CD8-positive, alpha-beta T cell (primary cell): ENCODE measurements at regions of chr11 and their contacts with region 1.

Region 1: DNA sequence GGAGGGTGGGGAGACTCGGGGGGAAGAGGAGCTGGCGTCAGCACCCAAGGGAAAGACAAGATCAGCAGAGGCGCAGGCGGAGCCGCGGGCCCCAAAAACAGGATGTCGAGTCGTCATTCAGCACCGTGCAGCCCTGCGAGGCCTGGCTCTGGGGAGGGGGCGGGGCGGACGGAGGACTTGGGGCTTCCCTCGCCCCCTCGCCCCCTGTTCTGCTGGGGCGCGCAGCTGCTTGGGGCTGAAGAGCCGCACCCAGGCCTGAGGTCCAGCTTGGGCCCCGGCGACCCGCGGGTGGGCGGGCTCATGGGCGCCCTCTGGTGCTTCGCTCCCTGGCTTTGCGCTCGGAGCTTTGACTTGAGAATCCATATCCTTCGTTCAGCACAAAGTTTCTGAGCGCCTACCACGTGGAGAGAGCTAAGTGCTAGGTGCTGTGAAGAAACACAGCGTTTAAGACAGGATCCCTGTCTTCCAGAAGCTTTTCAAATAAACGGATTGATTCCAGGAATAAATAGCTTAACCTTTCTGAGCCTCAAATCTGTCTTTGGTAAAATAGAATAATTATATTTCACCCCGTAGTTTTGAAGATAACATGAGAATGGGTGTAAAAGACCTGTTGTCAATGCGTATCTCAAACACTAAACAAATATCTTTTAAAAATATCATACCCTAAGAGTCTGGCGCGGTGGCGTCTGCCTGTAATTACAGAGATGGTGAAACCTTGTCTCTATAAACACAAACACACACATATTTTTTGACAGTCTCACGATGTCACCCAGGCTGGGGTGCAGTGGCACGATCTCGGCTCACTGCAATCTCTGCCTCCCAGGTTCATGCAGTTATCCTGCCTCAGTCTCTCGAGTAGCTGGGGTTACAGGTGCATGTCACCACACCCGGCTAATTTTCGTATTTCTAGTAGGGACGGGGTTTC is 929 bp upstream of the RHOG start:
- DNase-seq: peak; percentile 80 to 98 (median 94)
- ATAC-seq: peak; percentile 27
- H3K4me3 ChIP-seq: peak overlapping the region; percentile 70 to 95
- H3K4me3 Mint-ChIP-seq: peak overlapping the region; percentile 85
- H3K27ac ChIP-seq: peak overlapping the region; percentile 92 to 95
- H3K27ac Mint-ChIP-seq: peak overlapping the region; percentile 97
- H3K4me1 ChIP-seq: peaks cover 34% of the 10 kb centered on the region
- H3K4me1 Mint-ChIP-seq: peaks cover 46% of the 10 kb centered on the region
- H3K27me3 ChIP-seq: no peaks in the 10 kb centered on the region
- H3K27me3 Mint-ChIP-seq: no peaks in the 10 kb centered on the region
- CTCF ChIP-seq: peak; percentile 66

Region 2: GRCh38 chr11:3057069-3057963 is 784.4 kb before region 1 on chr11 and contains the start of gene CARS1:
- CTCF ChIA-PET with region 1: no interaction called
- POLR2A ChIA-PET with region 1: no interaction called
- intact Hi-C with region 1: loop called in 1 of 2 experiments (anchors 5 kb)
- DNase-seq: peak; percentile 79 to 96 (median 92)
- ATAC-seq: peak; percentile 97
- H3K4me3 ChIP-seq: peak within 1 kb of the TSS; percentile 88 to 93
- H3K4me3 Mint-ChIP-seq: peak within 1 kb of the TSS; percentile 87
- H3K27ac ChIP-seq: peak within 1 kb of the TSS; percentile 73 to 76
- H3K27ac Mint-ChIP-seq: peak within 1 kb of the TSS; percentile 79
- H3K4me1 ChIP-seq: peaks cover 17% of the 10 kb centered on the region
- H3K4me1 Mint-ChIP-seq: peaks cover 38% of the 10 kb centered on the region
- H3K27me3 ChIP-seq: no peaks in the 10 kb centered on the region
- H3K27me3 Mint-ChIP-seq: no peaks in the 10 kb centered on the region
- CTCF ChIP-seq: no peak
- total RNA-seq, gene CARS1: 34.2 to 34.7 TPM

Region 3: GRCh38 chr11:3797329-3798095 is 44.2 kb before region 1 on chr11 and contains the start of gene NUP98:
- CTCF ChIA-PET with region 1: interaction called, 3 read pairs
- POLR2A ChIA-PET with region 1: interaction called, 9 read pairs
- intact Hi-C with region 1: loop called (anchors 1 to 2 kb)
- DNase-seq: peak; percentile 99 to 100 (median 99)
- ATAC-seq: peak; percentile 92
- H3K4me3 ChIP-seq: peak within 1 kb of the TSS; percentile 80 to 96
- H3K4me3 Mint-ChIP-seq: peak within 1 kb of the TSS; percentile 96
- H3K27ac ChIP-seq: peak within 1 kb of the TSS; percentile 94 to 99
- H3K27ac Mint-ChIP-seq: peak within 1 kb of the TSS; percentile 100
- H3K4me1 ChIP-seq: peaks cover 37% of the 10 kb centered on the region
- H3K4me1 Mint-ChIP-seq: peaks cover 47% of the 10 kb centered on the region
- H3K27me3 ChIP-seq: no peaks in the 10 kb centered on the region
- H3K27me3 Mint-ChIP-seq: no peaks in the 10 kb centered on the region
- CTCF ChIP-seq: no peak
- total RNA-seq, gene NUP98: 204 to 210 TPM

Region 4: DNA sequence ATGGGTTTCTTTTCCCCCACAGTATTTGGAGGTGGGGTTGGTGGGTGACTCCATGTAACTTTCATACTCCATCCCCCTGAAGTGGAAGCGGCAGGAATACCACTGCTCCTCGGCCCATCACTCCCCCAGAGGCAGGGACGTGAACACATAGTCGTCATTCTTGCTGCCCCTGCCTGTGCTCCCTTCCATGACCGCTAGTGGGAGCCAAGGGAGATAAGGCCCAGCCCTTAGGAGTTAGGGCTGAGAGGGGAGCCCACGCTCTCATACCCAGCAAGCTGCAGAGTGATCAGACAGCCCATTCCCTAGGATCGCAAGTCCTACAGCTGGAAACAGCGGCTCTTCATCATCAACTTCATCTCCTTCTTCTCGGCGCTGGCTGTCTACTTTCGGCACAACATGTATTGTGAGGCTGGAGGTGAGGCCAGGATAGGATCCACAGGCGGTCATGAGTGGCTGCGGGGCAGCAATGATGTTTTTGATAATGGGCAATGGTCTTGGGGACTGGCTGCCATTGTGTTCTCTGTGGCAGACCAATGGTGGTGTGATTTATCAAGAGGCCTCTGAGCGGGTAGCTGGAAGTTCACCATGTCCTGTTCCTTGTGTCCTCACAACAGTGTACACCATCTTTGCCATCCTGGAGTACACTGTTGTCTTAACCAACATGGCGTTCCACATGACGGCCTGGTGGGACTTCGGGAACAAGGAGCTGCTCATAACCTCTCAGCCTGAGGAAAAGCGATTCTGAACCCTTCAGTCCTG is 16.8 kb before region 1 on chr11:
- CTCF ChIA-PET with region 1: interaction called, 43 read pairs
- POLR2A ChIA-PET with region 1: interaction called, 16 read pairs
- intact Hi-C with region 1: loop called (anchors 1 kb)
- DNase-seq: peak; percentile 67 to 90 (median 85)
- ATAC-seq: peak; percentile 99
- H3K4me3 ChIP-seq: no peak overlapping the region
- H3K4me3 Mint-ChIP-seq: peak overlapping the region; percentile 37
- H3K27ac ChIP-seq: peak overlapping the region in 1 of 2 experiments; percentile 56
- H3K27ac Mint-ChIP-seq: peak overlapping the region; percentile 89
- H3K4me1 ChIP-seq: peaks cover 10% of the 10 kb centered on the region
- H3K4me1 Mint-ChIP-seq: peaks cover 40% of the 10 kb centered on the region
- H3K27me3 ChIP-seq: no peaks in the 10 kb centered on the region
- H3K27me3 Mint-ChIP-seq: no peaks in the 10 kb centered on the region
- CTCF ChIP-seq: peak; percentile 68

Region 5: DNA sequence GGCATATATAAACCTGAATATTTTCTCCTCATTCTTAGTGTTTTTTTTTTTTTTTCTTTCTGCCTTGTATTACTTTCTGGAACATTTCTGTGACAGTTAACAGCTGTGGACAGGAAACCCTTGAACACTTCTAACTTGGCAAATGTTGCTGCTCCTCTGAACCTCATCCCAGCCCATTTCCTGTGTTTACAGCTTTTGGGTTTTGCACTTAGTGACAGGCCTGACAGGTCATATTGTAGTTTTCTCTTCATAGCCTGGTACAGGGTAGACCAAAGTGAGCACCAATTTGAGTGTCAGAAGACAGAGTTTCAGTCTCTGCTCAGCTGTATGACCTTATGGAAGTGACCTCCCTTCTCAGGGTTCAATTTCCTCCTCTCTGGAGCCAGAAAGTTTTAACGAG is 105.4 kb after region 1 on chr11:
- CTCF ChIA-PET with region 1: interaction called, 10 read pairs
- POLR2A ChIA-PET with region 1: interaction called, 19 read pairs
- intact Hi-C with region 1: no loop called
- DNase-seq: peak; percentile 23 to 90 (median 62)
- ATAC-seq: peak; percentile 72
- H3K4me3 ChIP-seq: peak overlapping the region; percentile 32 to 35
- H3K4me3 Mint-ChIP-seq: peak overlapping the region; percentile 75
- H3K27ac ChIP-seq: peak overlapping the region; percentile 68 to 86
- H3K27ac Mint-ChIP-seq: peak overlapping the region; percentile 95
- H3K4me1 ChIP-seq: peaks cover 95% of the 10 kb centered on the region
- H3K4me1 Mint-ChIP-seq: peaks cover 95% of the 10 kb centered on the region
- H3K27me3 ChIP-seq: no peaks in the 10 kb centered on the region
- H3K27me3 Mint-ChIP-seq: no peaks in the 10 kb centered on the region
- CTCF ChIP-seq: no peak